ENCODE measurements at regions of chr3 and their contacts with region 1.

Region 1: GRCh38 chr3:151086484-151087456 is 1.3 kb downstream of the MED12L start:
- DNase-seq: peak; percentile 27
- H3K4me3 ChIP-seq: peak overlapping the region; percentile 50
- H3K27me3 ChIP-seq: peaks cover 18% of the 10 kb centered on the region
- CTCF ChIP-seq: peak; percentile 76

Region 2: DNA sequence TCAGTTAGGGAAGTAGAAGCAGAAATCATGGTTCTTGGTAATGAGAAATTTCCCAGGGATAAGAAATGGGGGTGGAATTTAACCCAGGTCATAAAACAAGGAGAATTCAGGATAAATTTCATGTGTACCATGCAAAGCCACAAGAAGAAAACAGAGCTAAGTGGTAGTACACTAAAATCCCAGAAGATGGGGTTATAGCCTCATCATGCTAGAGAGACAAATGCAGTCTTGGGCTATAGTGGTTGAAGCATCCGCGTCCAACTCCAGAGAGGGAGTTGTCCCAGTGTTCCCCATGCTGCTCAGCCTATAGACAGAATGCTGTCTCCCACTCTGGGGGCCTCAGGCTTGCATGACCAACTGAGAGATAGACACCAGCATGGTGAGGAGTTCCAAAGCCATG is 78.1 kb before region 1 on chr3:
- CTCF ChIA-PET with region 1: interaction called, 13 read pairs
- POLR2A ChIA-PET with region 1: no interaction called
- DNase-seq: no peak
- H3K4me3 ChIP-seq: no peak overlapping the region
- H3K27me3 ChIP-seq: no peaks in the 10 kb centered on the region; the same call in 1 of the 2 replicates
- CTCF ChIP-seq: peak; percentile 60

Region 3: GRCh38 chr3:151037746-151038477 is 48.9 kb before region 1 on chr3:
- CTCF ChIA-PET with region 1: interaction called, 3 read pairs
- POLR2A ChIA-PET with region 1: interaction called, 18 read pairs
- DNase-seq: peak; percentile 76
- H3K4me3 ChIP-seq: no peak overlapping the region
- H3K27me3 ChIP-seq: no peaks in the 10 kb centered on the region
- CTCF ChIP-seq: no peak

Region 4: GRCh38 chr3:151305101-151305750 is 218.5 kb after region 1 on chr3:
- CTCF ChIA-PET with region 1: no interaction called
- POLR2A ChIA-PET with region 1: no interaction called
- DNase-seq: peak; percentile 92
- H3K4me3 ChIP-seq: no peak overlapping the region
- H3K27me3 ChIP-seq: no peaks in the 10 kb centered on the region; the same call in 1 of the 2 replicates
- CTCF ChIP-seq: peak; percentile 38